ENCODE measurements at regions of chr6 and their contacts with region 1.

Region 1: DNA sequence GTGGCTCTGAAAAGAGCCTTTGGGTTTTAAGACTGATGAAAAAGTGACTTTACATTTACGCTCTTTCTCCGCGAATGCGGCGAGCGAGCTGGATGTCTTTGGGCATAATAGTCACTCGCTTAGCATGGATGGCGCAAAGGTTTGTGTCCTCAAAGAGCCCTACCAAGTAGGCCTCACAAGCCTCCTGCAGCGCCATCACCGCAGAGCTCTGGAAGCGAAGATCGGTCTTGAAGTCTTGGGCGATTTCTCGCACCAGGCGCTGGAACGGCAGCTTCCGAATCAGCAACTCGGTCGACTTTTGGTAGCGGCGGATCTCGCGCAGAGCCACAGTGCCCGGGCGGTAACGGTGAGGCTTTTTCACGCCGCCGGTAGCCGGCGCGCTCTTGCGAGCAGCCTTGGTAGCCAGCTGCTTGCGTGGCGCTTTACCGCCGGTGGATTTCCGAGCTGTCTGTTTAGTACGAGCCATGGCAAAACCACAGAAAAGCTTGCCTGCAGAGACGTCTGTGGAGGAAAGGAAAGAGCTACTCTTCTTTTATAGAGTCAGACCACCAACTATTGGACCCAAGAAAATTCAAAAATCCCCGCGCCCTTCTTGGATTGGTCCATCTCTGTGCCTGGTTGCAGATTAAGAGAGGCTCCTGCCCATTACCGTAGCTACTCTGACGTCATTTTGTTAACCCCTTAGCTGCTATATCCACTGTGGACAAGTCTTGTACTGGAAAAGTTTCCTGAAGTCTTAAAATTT is 55.5 kb upstream of the HFE start:
- DNase-seq: peak; percentile 82 to 99 (median 94)
- ATAC-seq: peak; percentile 67
- H3K4me3 ChIP-seq: peak overlapping the region; percentile 61
- H3K27ac ChIP-seq: peak overlapping the region; percentile 99
- H3K4me1 ChIP-seq: peaks cover 16 to 42% of the 10 kb centered on the region in 2 experiments
- H3K27me3 ChIP-seq: no peaks in the 10 kb centered on the region
- CTCF ChIP-seq: peak; percentile 28 to 60 (median 40)
- EP300 ChIP-seq: peak; percentile 77
- POLR2A ChIP-seq: peak; percentile 100
- RAD21 ChIP-seq: peak; percentile 4 to 31; a peak in 1 of 4 replicates

Region 2: GRCh38 chr6:25692472-25692871 is 339.3 kb before region 1 on chr6:
- CTCF ChIA-PET with region 1: no interaction called
- POLR2A ChIA-PET with region 1: no interaction called
- in situ Hi-C with region 1: no loop called
- intact Hi-C with region 1: no loop called
- DNase-seq: no peak
- ATAC-seq: no peak
- H3K4me3 ChIP-seq: no peak overlapping the region
- H3K27ac ChIP-seq: no peak overlapping the region
- H3K4me1 ChIP-seq: no peaks in the 10 kb centered on the region; a peak in 1 of 5 replicates
- H3K27me3 ChIP-seq: peaks cover 0 to 5% of the 10 kb centered on the region in 2 experiments; a peak in 2 of 5 replicates
- CTCF ChIP-seq: no peak
- EP300 ChIP-seq: no peak
- POLR2A ChIP-seq: no peak
- RAD21 ChIP-seq: no peak

Region 3: DNA sequence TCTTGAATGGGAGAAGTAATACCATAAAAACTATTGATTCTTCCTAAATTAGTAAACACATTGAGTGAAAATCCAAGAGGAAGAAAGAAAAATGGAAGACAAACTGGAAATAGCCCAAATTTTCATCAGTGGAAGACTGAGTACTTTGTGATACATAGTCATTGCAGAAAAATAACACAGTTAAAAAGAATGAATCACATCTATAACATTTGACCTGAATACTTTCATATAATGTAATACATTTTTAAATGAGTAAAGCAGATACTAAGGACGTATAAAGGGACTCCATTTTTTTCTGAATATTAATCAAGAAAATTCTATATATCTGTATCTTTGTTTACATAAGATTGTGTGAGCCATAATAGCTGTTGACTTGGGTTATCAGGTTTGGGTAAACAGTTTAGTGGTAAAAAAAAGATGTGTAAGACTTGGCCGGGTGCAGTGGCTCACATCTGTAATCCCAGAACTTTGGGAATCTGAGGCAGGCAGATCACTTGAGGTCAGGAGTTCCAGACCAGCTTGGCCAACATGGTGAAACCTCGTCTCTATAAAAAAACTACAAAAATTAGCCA is 96.9 kb before region 1 on chr6:
- CTCF ChIA-PET with region 1: no interaction called
- POLR2A ChIA-PET with region 1: no interaction called
- in situ Hi-C with region 1: no loop called
- intact Hi-C with region 1: no loop called
- DNase-seq: no peak
- ATAC-seq: no peak
- H3K4me3 ChIP-seq: no peak overlapping the region
- H3K27ac ChIP-seq: no peak overlapping the region
- H3K4me1 ChIP-seq: no peaks in the 10 kb centered on the region
- H3K27me3 ChIP-seq: peaks cover 0 to 3% of the 10 kb centered on the region in 2 experiments; a peak in 3 of 5 replicates
- CTCF ChIP-seq: no peak
- EP300 ChIP-seq: no peak
- POLR2A ChIP-seq: no peak
- RAD21 ChIP-seq: no peak

Region 4: GRCh38 chr6:26017632-26017966 is 14.2 kb before region 1 on chr6:
- CTCF ChIA-PET with region 1: no interaction called
- POLR2A ChIA-PET with region 1: interaction called, 206 read pairs
- in situ Hi-C with region 1: no loop called
- intact Hi-C with region 1: no loop called
- DNase-seq: no peak
- ATAC-seq: no peak
- H3K4me3 ChIP-seq: no peak overlapping the region
- H3K27ac ChIP-seq: no peak overlapping the region
- H3K4me1 ChIP-seq: peaks cover 5 to 18% of the 10 kb centered on the region in 2 experiments; a peak in 4 of 5 replicates
- H3K27me3 ChIP-seq: no peaks in the 10 kb centered on the region
- CTCF ChIP-seq: no peak
- EP300 ChIP-seq: no peak
- POLR2A ChIP-seq: no peak
- RAD21 ChIP-seq: no peak

Region 5: DNA sequence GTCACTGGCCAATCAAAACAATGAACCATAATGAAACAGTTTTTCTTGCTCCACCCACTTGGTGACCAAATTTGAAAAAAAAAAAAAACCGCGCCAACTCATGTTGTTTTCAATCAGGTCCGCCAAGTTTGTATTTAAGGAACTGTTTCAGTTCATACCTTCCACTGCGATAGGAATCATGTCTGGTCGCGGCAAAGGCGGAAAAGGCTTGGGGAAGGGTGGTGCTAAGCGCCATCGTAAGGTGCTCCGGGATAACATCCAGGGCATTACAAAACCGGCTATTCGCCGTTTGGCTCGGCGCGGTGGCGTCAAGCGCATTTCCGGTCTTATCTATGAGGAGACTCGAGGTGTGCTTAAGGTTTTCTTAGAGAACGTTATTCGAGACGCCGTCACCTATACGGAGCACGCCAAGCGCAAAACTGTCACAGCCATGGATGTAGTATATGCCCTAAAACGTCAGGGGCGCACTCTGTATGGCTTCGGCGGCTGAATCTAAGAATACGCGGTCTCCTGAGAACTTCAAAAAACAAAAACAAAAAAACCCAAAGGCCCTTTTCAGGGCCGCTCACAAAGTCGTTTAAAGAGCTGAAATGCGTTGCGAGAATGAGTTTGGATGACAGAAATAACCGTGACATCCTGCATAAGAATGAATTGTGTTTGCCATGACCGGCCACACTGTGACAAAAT is 72.1 kb after region 1 on chr6:
- CTCF ChIA-PET with region 1: interaction called, 17 read pairs
- POLR2A ChIA-PET with region 1: interaction called, 149 read pairs
- in situ Hi-C with region 1: no loop called
- intact Hi-C with region 1: loop called (anchors 1 kb)
- DNase-seq: peak; percentile 78 to 98 (median 86)
- ATAC-seq: peak; percentile 91
- H3K4me3 ChIP-seq: peak overlapping the region; percentile 30
- H3K27ac ChIP-seq: peak overlapping the region; percentile 92
- H3K4me1 ChIP-seq: peaks cover 3 to 20% of the 10 kb centered on the region in 2 experiments; a peak in 3 of 5 replicates
- H3K27me3 ChIP-seq: no peaks in the 10 kb centered on the region
- CTCF ChIP-seq: peak; percentile 53 to 71 (median 61)
- EP300 ChIP-seq: peak; percentile 96
- POLR2A ChIP-seq: peak; percentile 100
- RAD21 ChIP-seq: peak; percentile 29 to 46; a peak in 3 of 4 replicates

Region 6: DNA sequence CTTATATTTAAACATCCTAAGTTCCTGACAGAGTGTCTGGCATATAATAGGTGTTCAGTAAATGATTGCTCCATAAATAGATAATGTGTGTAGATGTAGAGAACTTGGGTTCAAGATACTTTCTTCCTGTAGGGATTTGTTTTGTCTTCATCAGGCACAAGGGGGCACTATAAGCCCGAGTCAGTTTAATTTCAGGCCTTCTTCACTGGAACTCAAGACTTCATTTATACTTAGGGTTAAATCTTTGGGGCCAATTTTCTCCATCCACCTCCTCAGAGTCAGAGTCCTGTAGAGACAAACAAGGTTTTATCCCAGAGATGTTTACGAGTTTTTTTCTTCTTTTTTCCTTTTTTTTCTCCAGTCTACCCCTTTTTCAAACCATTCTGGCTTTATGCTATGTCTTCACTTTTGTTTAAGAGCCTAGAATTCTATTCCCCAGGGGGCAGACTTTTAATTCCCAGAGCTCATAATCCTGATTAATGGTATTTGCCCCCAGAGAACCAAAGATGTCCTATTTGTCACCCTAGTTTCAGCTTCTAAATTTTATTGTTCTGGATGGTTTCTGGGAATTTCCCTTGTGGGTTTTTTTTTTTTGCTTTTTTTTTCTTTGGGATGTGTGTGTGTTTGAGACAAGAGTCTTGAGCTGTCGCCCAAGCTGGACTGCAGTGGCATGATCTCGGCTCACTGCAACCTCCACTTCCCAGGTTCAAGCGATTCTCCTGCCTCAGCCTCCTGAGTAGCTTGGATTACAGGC is 143.8 kb after region 1 on chr6:
- CTCF ChIA-PET with region 1: no interaction called
- POLR2A ChIA-PET with region 1: interaction called, 11 read pairs
- in situ Hi-C with region 1: no loop called
- intact Hi-C with region 1: no loop called
- DNase-seq: peak; percentile 60 to 88 (median 71)
- ATAC-seq: peak; percentile 41
- H3K4me3 ChIP-seq: no peak overlapping the region
- H3K27ac ChIP-seq: no peak overlapping the region
- H3K4me1 ChIP-seq: peaks cover 14% of the 10 kb centered on the region in 2 experiments
- H3K27me3 ChIP-seq: no peaks in the 10 kb centered on the region
- CTCF ChIP-seq: peak; percentile 59 to 87 (median 77)
- EP300 ChIP-seq: no peak; the same call in 1 of the 2 replicates
- POLR2A ChIP-seq: no peak
- RAD21 ChIP-seq: peak; percentile 87 to 88

Region 7: DNA sequence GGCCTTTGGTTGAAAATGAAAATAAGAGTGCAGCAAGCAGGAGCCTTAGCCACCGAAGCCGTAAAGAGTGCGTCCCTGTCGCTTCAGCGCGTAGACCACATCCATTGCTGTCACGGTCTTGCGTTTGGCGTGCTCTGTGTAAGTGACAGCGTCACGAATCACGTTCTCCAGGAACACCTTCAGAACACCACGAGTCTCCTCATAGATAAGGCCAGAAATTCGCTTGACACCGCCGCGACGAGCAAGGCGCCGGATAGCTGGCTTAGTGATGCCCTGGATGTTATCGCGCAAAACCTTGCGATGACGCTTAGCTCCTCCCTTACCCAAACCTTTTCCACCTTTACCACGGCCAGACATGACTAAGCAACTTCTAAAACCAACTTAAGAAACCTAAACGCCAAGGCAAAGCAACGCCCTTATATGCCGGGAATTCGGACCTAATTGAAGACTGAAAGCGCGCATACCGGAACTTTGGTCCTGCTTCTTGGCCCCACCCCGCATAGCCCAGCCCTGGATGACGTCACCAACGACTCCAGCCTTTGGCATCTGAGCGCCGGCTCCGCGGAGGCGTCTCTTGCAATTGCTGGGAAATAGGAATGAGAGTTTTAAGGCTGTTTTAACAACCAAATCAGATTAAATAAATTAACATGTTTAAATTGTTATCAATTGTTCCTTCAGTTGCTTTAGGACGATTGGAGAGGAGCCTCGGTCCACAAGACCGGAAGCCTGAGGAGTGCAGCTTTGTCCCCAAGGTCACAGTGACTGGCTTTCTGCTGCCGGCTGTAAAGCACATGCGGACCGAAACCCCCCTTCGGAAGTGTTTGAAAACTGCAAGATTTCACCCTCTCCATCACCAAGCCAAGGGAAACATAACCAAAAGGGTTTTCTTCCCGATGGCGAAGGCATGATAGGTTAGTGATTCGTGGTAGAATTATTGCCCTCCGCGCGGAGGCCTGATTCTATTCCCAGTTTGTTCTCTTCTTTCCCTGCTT is 253.7 kb after region 1 on chr6:
- CTCF ChIA-PET with region 1: no interaction called
- POLR2A ChIA-PET with region 1: interaction called, 11 read pairs
- in situ Hi-C with region 1: no loop called
- intact Hi-C with region 1: loop called (anchors 10 kb)
- DNase-seq: peak; percentile 89 to 100 (median 92)
- ATAC-seq: peak; percentile 84
- H3K4me3 ChIP-seq: peak overlapping the region; percentile 50
- H3K27ac ChIP-seq: peak overlapping the region; percentile 97
- H3K4me1 ChIP-seq: peaks cover 11 to 19% of the 10 kb centered on the region in 2 experiments; a peak in 4 of 5 replicates
- H3K27me3 ChIP-seq: no peaks in the 10 kb centered on the region
- CTCF ChIP-seq: peak in 1 of 3 experiments; percentile 5; a peak in 2 of 6 replicates
- EP300 ChIP-seq: peak; percentile 96
- POLR2A ChIP-seq: peak; percentile 99
- RAD21 ChIP-seq: peak in 1 of 2 experiments; percentile 41; a peak in 3 of 4 replicates

Region 8: DNA sequence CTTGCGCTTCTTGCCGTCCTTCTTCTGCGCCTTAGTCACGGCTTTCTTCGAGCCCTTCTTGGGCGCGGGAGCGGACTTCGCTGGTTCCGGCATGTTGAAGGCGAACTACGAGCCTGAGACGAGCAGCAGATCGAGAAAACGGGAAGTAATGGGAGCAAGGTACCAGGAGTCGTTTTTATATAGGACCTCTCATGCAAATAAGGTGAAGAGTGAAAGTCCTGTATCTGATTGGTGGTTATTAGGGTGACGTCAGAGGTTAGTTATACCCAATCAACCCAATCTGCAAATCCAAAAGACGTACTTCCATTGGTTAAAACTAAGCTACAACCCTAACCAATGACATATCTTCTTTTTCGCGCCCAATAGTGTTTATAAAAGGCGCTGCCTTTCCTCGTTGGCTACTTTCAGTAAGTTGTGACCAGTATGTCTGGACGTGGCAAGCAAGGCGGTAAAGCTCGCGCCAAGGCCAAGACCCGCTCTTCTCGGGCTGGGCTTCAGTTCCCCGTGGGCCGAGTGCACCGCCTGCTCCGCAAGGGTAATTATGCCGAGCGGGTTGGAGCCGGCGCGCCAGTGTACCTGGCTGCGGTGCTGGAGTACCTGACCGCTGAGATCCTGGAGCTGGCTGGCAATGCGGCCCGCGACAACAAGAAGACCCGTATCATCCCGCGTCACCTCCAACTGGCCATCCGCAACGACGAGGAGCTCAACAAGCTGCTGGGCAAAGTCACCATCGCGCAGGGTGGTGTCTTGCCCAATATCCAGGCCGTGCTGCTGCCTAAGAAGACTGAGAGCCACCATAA is 1115.1 kb after region 1 on chr6:
- CTCF ChIA-PET with region 1: no interaction called
- POLR2A ChIA-PET with region 1: interaction called, 20 read pairs
- in situ Hi-C with region 1: no loop called
- intact Hi-C with region 1: no loop called
- DNase-seq: peak; percentile 93 to 99 (median 98)
- ATAC-seq: peak; percentile 68
- H3K4me3 ChIP-seq: peak overlapping the region; percentile 71
- H3K27ac ChIP-seq: peak overlapping the region; percentile 94
- H3K4me1 ChIP-seq: peaks cover 4 to 13% of the 10 kb centered on the region in 2 experiments
- H3K27me3 ChIP-seq: no peaks in the 10 kb centered on the region
- CTCF ChIP-seq: no peak
- EP300 ChIP-seq: no peak; the same call in 1 of the 2 replicates
- POLR2A ChIP-seq: peak; percentile 100
- RAD21 ChIP-seq: no peak; a peak in 1 of 4 replicates